Panc1 (cell line): ENCODE measurements at regions of chr11 and their contacts with region 1.

Region 1: GRCh38 chr11:47454180-47454644 is 5.3 kb upstream of the RAPSN start:
- DNase-seq: peak; percentile 52
- ATAC-seq: peak; percentile 76
- H3K4me3 ChIP-seq: no peak overlapping the region
- H3K27ac ChIP-seq: no peak overlapping the region
- H3K4me1 ChIP-seq: no peaks in the 10 kb centered on the region
- H3K27me3 ChIP-seq: no peaks in the 10 kb centered on the region
- CTCF ChIP-seq: peak; percentile 84

Region 2: GRCh38 chr11:47373876-47374720 is 80.1 kb before region 1 on chr11:
- CTCF ChIA-PET with region 1: interaction called, 8 read pairs
- POLR2A ChIA-PET with region 1: no interaction called
- in situ Hi-C with region 1: no loop called
- intact Hi-C with region 1: loop called (anchors 5 kb)
- DNase-seq: peak; percentile 33
- ATAC-seq: peak; percentile 95
- H3K4me3 ChIP-seq: no peak overlapping the region
- H3K27ac ChIP-seq: no peak overlapping the region
- H3K4me1 ChIP-seq: no peaks in the 10 kb centered on the region; the same call in 1 of the 2 replicates
- H3K27me3 ChIP-seq: no peaks in the 10 kb centered on the region
- CTCF ChIP-seq: peak; percentile 98

Region 3: GRCh38 chr11:47837292-47837691 is 383.1 kb after region 1 on chr11:
- CTCF ChIA-PET with region 1: no interaction called
- POLR2A ChIA-PET with region 1: no interaction called
- in situ Hi-C with region 1: no loop called
- intact Hi-C with region 1: no loop called
- DNase-seq: no peak
- ATAC-seq: no peak
- H3K4me3 ChIP-seq: no peak overlapping the region
- H3K27ac ChIP-seq: no peak overlapping the region
- H3K4me1 ChIP-seq: no peaks in the 10 kb centered on the region
- H3K27me3 ChIP-seq: no peaks in the 10 kb centered on the region
- CTCF ChIP-seq: no peak